ENCODE measurements at regions of chr16 and their contacts with region 1.

Region 1: DNA sequence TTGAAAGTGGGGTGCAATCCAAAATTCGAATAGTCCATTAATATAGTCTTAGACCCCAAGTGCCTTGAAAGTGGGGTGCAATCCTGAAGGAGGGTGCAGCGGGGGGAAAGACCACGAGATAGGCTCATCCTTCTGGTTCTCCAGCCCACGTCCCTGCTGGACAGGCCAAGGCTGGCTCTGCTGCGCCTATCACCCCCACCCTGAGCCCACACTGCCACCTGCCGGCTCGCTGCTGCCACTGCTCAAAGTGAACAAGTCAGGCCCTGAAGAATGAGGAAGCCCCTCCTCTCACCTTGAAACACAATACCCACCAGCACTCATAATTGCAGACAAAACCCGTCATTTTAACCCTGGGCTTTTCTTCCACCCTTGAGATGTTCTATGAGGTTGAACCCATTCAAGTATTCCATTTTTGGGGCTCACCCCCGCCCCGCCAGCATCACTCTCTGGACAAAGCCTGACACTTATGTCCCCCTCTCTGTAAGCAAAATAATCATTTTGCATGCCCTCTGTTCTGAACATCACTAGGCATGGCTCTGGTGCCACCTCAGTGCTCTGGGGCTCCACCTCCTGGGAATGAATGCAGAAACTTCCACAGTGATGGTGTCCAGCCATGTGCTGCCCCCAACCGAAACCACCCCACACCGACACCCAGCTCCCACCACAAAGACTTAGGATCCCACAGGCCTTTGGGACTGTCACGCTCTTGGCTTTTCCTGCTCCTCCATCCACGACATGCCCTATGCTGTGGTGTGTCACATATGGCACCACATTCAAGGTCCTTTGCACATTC is 56.8 kb downstream of the BEAN1 start:
- DNase-seq: peak; percentile 85 to 91
- H3K4me3 ChIP-seq: no peak overlapping the region
- H3K4me3 Mint-ChIP-seq: no peak overlapping the region
- H3K27ac Mint-ChIP-seq: no peak overlapping the region
- H3K4me1 ChIP-seq: peaks cover 13% of the 10 kb centered on the region; the same call in 1 of the 2 replicates
- H3K4me1 Mint-ChIP-seq: no peaks in the 10 kb centered on the region
- H3K27me3 ChIP-seq: no peaks in the 10 kb centered on the region
- H3K27me3 Mint-ChIP-seq: no peaks in the 10 kb centered on the region
- CTCF ChIP-seq: peak; percentile 96 to 99

Region 2: GRCh38 chr16:65426484-65426883 is 1057.4 kb before region 1 on chr16:
- CTCF ChIA-PET with region 1: interaction called, 10 read pairs
- POLR2A ChIA-PET with region 1: no interaction called
- intact Hi-C with region 1: no loop called
- DNase-seq: no peak
- H3K4me3 ChIP-seq: no peak overlapping the region
- H3K4me3 Mint-ChIP-seq: no peak overlapping the region
- H3K27ac Mint-ChIP-seq: no peak overlapping the region
- H3K4me1 ChIP-seq: no peaks in the 10 kb centered on the region
- H3K4me1 Mint-ChIP-seq: no peaks in the 10 kb centered on the region
- H3K27me3 ChIP-seq: no peaks in the 10 kb centered on the region
- H3K27me3 Mint-ChIP-seq: peaks cover 3% of the 10 kb centered on the region
- CTCF ChIP-seq: no peak

Region 3: GRCh38 chr16:66357153-66357928 is 126.5 kb before region 1 on chr16:
- CTCF ChIA-PET with region 1: no interaction called
- POLR2A ChIA-PET with region 1: no interaction called
- intact Hi-C with region 1: loop called (anchors 1 kb)
- DNase-seq: peak; percentile 69 to 76
- H3K4me3 ChIP-seq: no peak overlapping the region
- H3K4me3 Mint-ChIP-seq: no peak overlapping the region
- H3K27ac Mint-ChIP-seq: no peak overlapping the region
- H3K4me1 ChIP-seq: peaks cover 27% of the 10 kb centered on the region
- H3K4me1 Mint-ChIP-seq: peaks cover 4% of the 10 kb centered on the region
- H3K27me3 ChIP-seq: no peaks in the 10 kb centered on the region
- H3K27me3 Mint-ChIP-seq: no peaks in the 10 kb centered on the region
- CTCF ChIP-seq: peak; percentile 76 to 79

Region 4: DNA sequence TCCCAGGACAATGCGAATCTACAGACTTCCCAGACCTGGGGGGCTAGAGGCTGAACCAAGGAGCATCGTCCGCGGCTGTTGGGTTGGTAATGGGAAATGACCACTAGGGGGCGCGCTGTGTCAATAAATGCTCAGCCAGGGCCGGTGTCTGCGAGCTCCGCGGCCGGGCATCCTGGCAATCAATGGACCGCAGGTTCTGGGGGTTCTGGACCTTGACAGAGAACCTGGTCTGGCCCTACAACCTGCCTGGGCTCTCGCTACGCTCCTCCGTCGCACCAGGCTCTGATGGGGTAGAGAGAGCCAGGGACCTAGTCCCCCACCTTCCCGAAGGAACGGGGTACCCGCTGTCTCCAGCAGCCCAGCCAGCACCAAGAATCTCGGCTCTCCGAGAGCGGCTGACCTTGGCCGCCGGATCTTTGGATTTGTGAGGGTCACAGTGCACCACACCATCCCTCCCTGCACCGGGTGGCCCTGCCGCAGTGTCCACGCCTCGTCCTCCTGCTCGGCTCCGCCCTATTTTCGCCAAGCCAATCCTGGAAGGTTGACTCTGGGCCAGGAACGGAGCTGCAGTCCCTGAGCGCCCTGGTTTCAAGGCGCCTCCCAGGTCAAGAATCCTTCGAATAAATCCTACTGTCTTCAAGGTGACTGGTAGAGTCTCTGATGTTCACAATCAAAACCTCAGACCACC is 77.2 kb before region 1 on chr16:
- CTCF ChIA-PET with region 1: interaction called, 14 read pairs
- POLR2A ChIA-PET with region 1: no interaction called
- intact Hi-C with region 1: loop called (anchors 1 kb)
- DNase-seq: peak; percentile 74 to 88
- H3K4me3 ChIP-seq: peak overlapping the region; percentile 34
- H3K4me3 Mint-ChIP-seq: peak overlapping the region; percentile 75
- H3K27ac Mint-ChIP-seq: no peak overlapping the region
- H3K4me1 ChIP-seq: peaks cover 15% of the 10 kb centered on the region; the same call in 1 of the 2 replicates
- H3K4me1 Mint-ChIP-seq: peaks cover 9% of the 10 kb centered on the region
- H3K27me3 ChIP-seq: no peaks in the 10 kb centered on the region
- H3K27me3 Mint-ChIP-seq: peaks cover 7% of the 10 kb centered on the region
- CTCF ChIP-seq: peak; percentile 81 to 93

Region 5: GRCh38 chr16:66427036-66427860 is 56.6 kb before region 1 on chr16 and contains the start of gene BEAN1:
- CTCF ChIA-PET with region 1: no interaction called
- POLR2A ChIA-PET with region 1: no interaction called
- intact Hi-C with region 1: loop called (anchors 5 kb)
- DNase-seq: peak in 1 of 2 experiments; percentile 50
- H3K4me3 ChIP-seq: peak within 1 kb of the TSS; percentile 44
- H3K4me3 Mint-ChIP-seq: peak within 1 kb of the TSS; percentile 70
- H3K27ac Mint-ChIP-seq: no peak within 1 kb of the TSS
- H3K4me1 ChIP-seq: no peaks in the 10 kb centered on the region
- H3K4me1 Mint-ChIP-seq: peaks cover 6% of the 10 kb centered on the region
- H3K27me3 ChIP-seq: peaks cover 9% of the 10 kb centered on the region
- H3K27me3 Mint-ChIP-seq: peaks cover 32% of the 10 kb centered on the region
- CTCF ChIP-seq: no peak
- total RNA-seq, gene BEAN1: not detected in 2 replicates

Region 6: DNA sequence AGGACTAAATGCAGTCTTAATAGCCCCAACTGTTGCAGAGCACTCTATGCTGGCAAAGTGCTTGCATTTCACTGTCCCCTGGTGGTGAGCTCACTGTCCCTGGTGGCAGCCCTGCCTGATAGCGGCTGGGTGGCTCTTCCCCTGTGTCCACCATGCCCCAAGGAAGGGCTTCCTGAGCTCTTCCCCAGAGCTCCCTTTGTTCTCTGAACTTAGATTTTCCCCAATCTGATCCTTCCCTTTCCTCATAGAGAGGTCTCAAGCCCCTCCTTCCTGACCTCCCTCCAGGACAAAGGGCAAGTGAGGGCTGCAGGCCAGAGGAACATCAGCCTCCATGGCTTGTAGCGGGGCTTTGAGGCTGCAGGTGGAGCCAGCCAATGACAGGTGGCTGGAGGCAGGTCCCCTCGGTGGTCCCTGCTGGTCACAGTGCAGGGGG is 39.8 kb before region 1 on chr16:
- CTCF ChIA-PET with region 1: interaction called, 3 read pairs
- POLR2A ChIA-PET with region 1: no interaction called
- intact Hi-C with region 1: loop called (anchors 5 kb)
- DNase-seq: no peak
- H3K4me3 ChIP-seq: no peak overlapping the region
- H3K4me3 Mint-ChIP-seq: no peak overlapping the region
- H3K27ac Mint-ChIP-seq: no peak overlapping the region
- H3K4me1 ChIP-seq: no peaks in the 10 kb centered on the region
- H3K4me1 Mint-ChIP-seq: no peaks in the 10 kb centered on the region
- H3K27me3 ChIP-seq: no peaks in the 10 kb centered on the region
- H3K27me3 Mint-ChIP-seq: peaks cover 22% of the 10 kb centered on the region
- CTCF ChIP-seq: peak; percentile 21 to 38